K562 (cell line): ENCODE measurements at regions of chr16 and their contacts with region 1.

Region 1: GRCh38 chr16:56317998-56318826 is 107.1 kb downstream of the AMFR start:
- DNase-seq: peak; percentile 78 to 95 (median 92)
- ATAC-seq: peak; percentile 96
- H3K4me3 ChIP-seq: no peak overlapping the region
- H3K27ac ChIP-seq: no peak overlapping the region
- H3K4me1 ChIP-seq: peaks cover 0 to 7% of the 10 kb centered on the region in 2 experiments; a peak in 2 of 5 replicates
- H3K27me3 ChIP-seq: peaks cover 5 to 40% of the 10 kb centered on the region in 2 experiments; a peak in 4 of 5 replicates
- CTCF ChIP-seq: peak; percentile 88 to 96 (median 91)
- EP300 ChIP-seq: no peak
- POLR2A ChIP-seq: no peak
- RAD21 ChIP-seq: peak; percentile 97 to 99

Region 2: DNA sequence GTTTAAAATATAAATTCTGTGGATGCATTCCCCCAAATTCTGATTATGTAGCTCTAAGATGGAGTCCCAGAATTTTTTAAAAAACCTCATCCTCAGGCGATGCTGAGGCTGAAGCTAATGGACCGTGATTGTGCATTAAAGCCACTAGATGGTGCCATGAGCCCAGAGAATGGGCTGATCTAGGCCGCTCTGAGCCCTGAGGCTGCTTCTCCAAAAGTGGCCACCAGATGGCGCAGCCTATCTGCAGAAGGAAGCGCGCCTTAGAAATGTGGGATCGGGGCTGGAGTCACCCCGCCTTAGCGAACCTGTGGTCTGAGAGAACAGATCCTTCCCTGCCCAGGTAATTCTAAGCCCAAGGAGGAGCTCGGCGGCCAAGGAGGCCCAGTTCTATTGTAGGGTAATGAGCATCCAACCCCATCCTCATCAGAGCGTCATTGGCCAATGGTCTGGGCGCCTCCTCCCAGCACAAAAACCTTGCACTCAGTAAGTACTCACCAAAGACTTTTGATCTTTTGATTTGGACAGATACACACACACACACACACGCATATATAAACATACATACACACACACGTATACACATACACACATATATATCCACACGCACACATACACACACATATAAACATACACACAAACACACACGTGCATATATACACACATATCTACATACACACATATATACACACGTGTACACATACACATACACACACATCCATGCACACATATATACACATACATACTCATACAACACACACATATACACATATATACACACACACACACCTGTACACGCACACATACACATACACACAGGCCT is 852.9 kb before region 1 on chr16:
- CTCF ChIA-PET with region 1: interaction called, 8 read pairs
- POLR2A ChIA-PET with region 1: no interaction called
- in situ Hi-C with region 1: loop called (anchors 10 kb)
- intact Hi-C with region 1: loop called (anchors 2 kb)
- DNase-seq: peak; percentile 81 to 91 (median 90)
- ATAC-seq: peak; percentile 97
- H3K4me3 ChIP-seq: no peak overlapping the region
- H3K27ac ChIP-seq: no peak overlapping the region
- H3K4me1 ChIP-seq: no peaks in the 10 kb centered on the region
- H3K27me3 ChIP-seq: peaks cover 3 to 17% of the 10 kb centered on the region in 2 experiments; a peak in 3 of 5 replicates
- CTCF ChIP-seq: peak; percentile 100
- EP300 ChIP-seq: no peak
- POLR2A ChIP-seq: no peak
- RAD21 ChIP-seq: peak; percentile 99 to 100

Region 3: DNA sequence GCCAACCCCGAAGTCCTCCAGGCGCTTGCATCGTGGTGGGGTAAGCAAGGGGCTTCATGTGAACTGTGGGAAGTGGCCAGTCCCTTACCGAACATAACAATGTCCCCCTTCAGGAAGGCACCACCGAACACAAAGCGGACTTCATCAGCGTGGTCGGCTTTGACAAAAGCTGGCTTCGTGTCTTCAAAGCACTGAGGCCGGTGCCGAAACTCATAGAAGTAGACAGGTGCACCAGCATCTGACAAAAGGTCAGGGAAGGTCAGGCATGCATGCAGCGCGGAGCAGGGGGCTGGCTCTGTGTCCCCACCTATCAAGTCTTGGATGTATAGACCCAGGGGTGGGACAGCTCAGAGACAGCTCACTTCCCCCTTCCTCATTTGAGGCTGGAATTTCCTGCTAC is 468.7 kb before region 1 on chr16:
- CTCF ChIA-PET with region 1: no interaction called
- POLR2A ChIA-PET with region 1: no interaction called
- in situ Hi-C with region 1: no loop called
- intact Hi-C with region 1: loop called (anchors 5 kb)
- DNase-seq: no peak
- ATAC-seq: no peak
- H3K4me3 ChIP-seq: no peak overlapping the region
- H3K27ac ChIP-seq: no peak overlapping the region
- H3K4me1 ChIP-seq: no peaks in the 10 kb centered on the region
- H3K27me3 ChIP-seq: peaks cover 7 to 8% of the 10 kb centered on the region in 2 experiments; a peak in 3 of 5 replicates
- CTCF ChIP-seq: no peak
- EP300 ChIP-seq: no peak
- POLR2A ChIP-seq: no peak
- RAD21 ChIP-seq: no peak

Region 4: GRCh38 chr16:55949518-55949917 is 368.7 kb before region 1 on chr16:
- CTCF ChIA-PET with region 1: interaction called, 5 read pairs
- POLR2A ChIA-PET with region 1: no interaction called
- in situ Hi-C with region 1: loop called (anchors 5 kb)
- intact Hi-C with region 1: loop called (anchors 2 kb)
- DNase-seq: no peak
- ATAC-seq: no peak
- H3K4me3 ChIP-seq: no peak overlapping the region
- H3K27ac ChIP-seq: no peak overlapping the region
- H3K4me1 ChIP-seq: no peaks in the 10 kb centered on the region; a peak in 1 of 5 replicates
- H3K27me3 ChIP-seq: no peaks in the 10 kb centered on the region
- CTCF ChIP-seq: no peak
- EP300 ChIP-seq: no peak
- POLR2A ChIP-seq: no peak
- RAD21 ChIP-seq: no peak

Region 5: DNA sequence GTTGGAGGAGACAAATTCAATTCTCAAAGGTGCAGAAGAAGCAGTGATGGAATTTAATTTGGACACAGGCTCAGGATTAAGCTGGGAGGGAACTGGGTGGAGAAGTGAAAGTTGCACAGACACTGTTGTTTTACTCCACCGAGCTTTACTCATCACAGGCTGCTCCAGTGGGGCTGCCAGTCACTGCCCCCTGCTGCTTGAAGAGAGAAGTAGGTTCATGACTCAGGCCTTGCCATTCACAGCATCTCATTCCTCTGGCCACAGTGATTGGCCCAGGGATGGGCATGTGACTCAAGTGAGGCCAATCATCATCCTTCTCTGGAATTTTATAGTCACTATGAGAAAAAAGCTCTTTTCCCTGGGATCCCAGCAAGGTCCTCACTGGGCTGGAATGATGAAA is 115.2 kb before region 1 on chr16:
- CTCF ChIA-PET with region 1: no interaction called
- POLR2A ChIA-PET with region 1: no interaction called
- in situ Hi-C with region 1: no loop called
- intact Hi-C with region 1: loop called (anchors 10 kb)
- DNase-seq: peak; percentile 54 to 67 (median 60)
- ATAC-seq: peak; percentile 100
- H3K4me3 ChIP-seq: no peak overlapping the region
- H3K27ac ChIP-seq: no peak overlapping the region
- H3K4me1 ChIP-seq: no peaks in the 10 kb centered on the region
- H3K27me3 ChIP-seq: peaks cover 0 to 10% of the 10 kb centered on the region in 2 experiments; a peak in 2 of 5 replicates
- CTCF ChIP-seq: peak; percentile 54 to 57 (median 57)
- EP300 ChIP-seq: no peak
- POLR2A ChIP-seq: no peak
- RAD21 ChIP-seq: peak; percentile 59 to 74

Region 6: GRCh38 chr16:56262148-56262547 is 56.1 kb before region 1 on chr16:
- CTCF ChIA-PET with region 1: no interaction called
- POLR2A ChIA-PET with region 1: no interaction called
- in situ Hi-C with region 1: no loop called
- intact Hi-C with region 1: loop called (anchors 5 kb)
- DNase-seq: peak; percentile 86 to 87 (median 87)
- ATAC-seq: peak; percentile 91
- H3K4me3 ChIP-seq: no peak overlapping the region
- H3K27ac ChIP-seq: peak overlapping the region; percentile 57
- H3K4me1 ChIP-seq: peaks cover 22 to 44% of the 10 kb centered on the region in 2 experiments
- H3K27me3 ChIP-seq: no peaks in the 10 kb centered on the region
- CTCF ChIP-seq: peak in 2 of 3 experiments; percentile 23 to 26; a peak in 3 of 6 replicates
- EP300 ChIP-seq: peak; percentile 68; the same call in 1 of the 2 replicates
- POLR2A ChIP-seq: no peak
- RAD21 ChIP-seq: peak in 1 of 2 experiments; percentile 34; a peak in 2 of 4 replicates

Region 7: DNA sequence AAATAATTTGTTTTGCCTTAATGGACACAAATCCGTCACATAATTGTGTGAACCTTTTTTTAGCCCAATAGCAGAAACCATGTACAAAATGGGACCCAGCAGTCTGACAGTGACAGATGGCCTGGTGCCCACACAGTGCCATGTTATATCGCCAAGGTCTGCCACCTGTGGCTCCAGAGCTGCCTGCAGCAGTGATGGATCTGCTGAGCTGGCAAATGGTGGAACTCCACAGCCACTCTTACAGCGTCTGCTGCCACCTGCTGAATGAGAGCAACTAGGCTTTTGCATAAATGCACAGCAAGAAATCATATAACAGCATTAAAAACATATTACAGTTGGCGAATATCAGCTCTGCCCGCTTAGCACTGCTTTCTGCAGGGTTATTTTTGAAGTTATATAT is 471.1 kb after region 1 on chr16:
- CTCF ChIA-PET with region 1: no interaction called
- POLR2A ChIA-PET with region 1: no interaction called
- in situ Hi-C with region 1: no loop called
- intact Hi-C with region 1: no loop called
- DNase-seq: peak in 3 of 4 experiments; percentile 14 to 19 (median 17)
- ATAC-seq: peak; percentile 54; the same call in 1 of the 3 replicates
- H3K4me3 ChIP-seq: no peak overlapping the region
- H3K27ac ChIP-seq: no peak overlapping the region
- H3K4me1 ChIP-seq: no peaks in the 10 kb centered on the region
- H3K27me3 ChIP-seq: no peaks in the 10 kb centered on the region
- CTCF ChIP-seq: peak; percentile 38 to 62 (median 52); a peak in 5 of 6 replicates
- EP300 ChIP-seq: no peak
- POLR2A ChIP-seq: no peak
- RAD21 ChIP-seq: peak; percentile 42 to 65